Cardiac septum (tissue), 1 donor: ENCODE measurements at regions of chr7 and their contacts with region 1.

Region 1: DNA sequence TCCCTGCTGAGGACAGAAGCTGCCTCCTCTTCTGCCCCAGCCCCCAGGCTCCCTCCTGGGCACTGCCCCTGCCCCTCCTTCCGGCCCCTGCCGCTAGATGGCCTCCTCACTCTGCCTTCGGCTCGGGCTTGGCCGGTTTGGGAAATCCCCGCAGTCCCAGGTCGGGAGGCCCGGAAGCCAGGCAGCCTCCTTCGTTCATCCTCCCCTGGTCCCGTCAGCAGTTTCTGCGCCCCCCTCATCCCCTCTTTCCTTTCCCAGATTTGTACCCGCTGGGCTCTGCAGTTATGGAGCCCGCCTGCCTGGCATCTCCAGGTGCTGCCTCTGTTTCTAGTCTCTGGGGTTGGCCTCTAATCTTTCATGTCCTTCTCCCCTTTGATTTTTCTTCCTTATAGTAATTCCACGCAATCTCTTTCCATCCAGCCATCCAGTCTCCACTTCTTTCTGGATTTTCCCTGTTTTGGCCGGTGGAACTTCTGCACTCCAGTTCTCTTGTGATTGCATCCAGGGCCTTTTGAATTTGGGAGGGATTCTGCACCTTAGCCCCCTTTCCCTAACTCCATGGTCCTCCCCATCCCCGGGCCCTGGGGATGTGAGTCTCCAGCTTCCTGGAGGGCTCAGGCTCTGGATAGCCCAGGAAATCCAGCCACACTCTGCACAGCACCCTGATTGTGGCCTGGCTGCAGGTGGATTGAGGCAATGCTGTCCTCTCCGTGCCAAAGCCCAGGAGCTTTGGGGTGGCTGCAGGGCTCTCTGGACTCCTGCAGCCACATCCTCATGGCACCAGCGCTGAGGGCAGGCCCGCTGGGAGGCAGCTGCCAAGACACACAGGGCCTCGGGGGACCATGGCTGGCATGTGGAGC is 3.3 kb upstream of the SHH start:
- DNase-seq: no peak

Region 2: DNA sequence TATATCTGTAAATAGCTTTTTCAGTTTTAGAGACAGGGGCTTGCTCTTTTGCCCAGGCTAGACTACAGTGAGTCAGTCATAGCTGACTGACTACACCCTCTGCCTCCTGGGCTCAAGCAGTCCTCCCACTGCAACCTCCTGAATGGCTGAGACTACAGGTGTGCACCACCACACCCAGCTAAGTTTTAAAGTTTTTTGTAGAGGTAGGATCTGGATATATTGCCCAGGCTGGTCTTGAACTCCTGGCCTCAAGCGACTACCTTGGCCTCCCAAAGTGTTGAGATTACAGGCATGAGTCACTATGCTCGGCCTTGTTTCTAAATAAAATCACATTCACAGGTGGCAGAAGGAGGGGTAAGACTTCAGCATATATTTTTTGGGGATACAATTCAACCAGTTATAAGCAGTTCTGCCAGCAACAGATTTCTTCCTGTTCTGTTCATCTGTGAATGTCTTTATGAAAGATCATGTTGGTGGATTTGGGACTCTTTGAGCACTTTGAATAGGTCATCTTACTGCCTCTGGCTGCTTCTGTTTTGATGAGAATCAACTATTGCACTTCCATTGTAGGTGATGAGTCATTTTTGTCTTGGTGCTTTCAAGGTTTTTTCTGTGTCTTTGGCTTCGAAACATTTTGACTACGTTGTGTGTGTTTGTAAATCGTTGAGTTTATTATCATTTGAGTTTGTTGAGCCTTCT is 155.4 kb before region 1 on chr7:
- intact Hi-C with region 1: no loop called
- DNase-seq: no peak

Region 3: DNA sequence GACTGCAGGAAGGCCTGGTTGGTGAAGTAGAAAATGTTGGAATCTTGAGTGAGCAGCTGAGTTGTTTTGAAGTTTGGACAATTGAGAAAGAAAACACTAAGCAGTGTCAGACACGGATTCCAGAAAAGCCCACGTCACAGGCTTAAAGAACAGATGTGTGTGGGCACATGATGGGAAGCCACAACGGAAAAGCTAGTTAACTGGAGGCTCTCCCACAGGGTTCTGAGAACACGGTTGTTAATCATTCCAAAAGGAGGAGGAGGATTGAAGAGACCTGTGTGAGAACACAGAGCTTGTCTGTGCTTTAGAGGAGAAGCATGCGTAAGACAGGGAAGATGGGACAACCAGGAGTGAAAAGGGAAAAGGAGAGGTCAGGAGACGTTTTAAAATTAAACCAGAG is 45.9 kb before region 1 on chr7:
- intact Hi-C with region 1: no loop called
- DNase-seq: no peak

Region 4: GRCh38 chr7:156473476-156474240 is 658.1 kb after region 1 on chr7:
- intact Hi-C with region 1: loop called (anchors 5 kb)
- DNase-seq: no peak